Activated CD4-positive, alpha-beta T cell treated with anti-CD3 and anti-CD28 coated beads for 36 hours (primary cell): ENCODE measurements at regions of chr11 and their contacts with region 1.

Region 1: DNA sequence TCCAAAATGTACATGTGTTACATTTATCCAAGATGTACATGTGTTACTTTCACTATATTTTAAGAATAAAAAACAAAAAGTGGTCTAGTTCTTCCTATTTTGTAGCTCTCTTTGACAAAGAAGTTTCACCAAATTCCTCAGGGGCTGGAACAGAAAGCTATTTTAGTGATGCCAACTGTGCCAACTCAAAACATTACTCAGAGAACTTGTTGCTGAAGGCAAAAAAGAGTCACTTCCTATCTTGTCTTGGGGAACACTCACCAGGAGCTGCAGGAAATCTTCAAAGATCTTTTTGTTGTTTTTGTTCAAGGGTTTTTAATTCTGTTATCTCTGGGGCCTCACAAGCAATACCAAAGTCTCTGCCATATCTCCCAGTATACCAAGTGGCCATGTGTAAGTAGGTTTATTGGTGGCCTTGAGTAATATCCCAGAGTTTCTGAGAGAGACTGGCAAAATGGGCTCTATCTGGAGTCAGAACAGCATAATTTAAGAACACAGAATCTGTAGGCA is 13.6 kb upstream of the EED start:
- DNase-seq: no peak
- ATAC-seq: peak; percentile 28
- H3K4me3 Mint-ChIP-seq: peak overlapping the region; percentile 20
- H3K27ac Mint-ChIP-seq: peak overlapping the region; percentile 86
- H3K4me1 Mint-ChIP-seq: peaks cover 65% of the 10 kb centered on the region
- H3K27me3 Mint-ChIP-seq: no peaks in the 10 kb centered on the region

Region 2: DNA sequence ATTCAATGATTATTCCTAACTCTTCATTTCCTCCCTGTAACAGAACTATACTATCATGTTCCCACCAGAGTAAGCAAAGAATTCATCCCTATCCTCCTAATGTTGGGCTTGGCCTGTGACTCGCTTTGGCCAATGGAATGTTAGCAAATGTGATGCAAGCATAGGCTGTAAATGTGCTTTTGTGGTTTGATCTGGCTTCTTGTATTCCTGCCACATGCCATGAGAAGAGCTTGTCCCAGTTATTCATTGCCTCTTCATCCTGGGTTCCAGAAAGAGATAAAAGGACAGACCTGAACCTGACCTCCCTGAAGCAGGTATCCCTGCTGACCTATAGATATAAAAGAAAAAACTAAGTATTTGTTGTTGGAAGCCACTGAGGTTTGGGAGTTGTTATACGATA is 471.1 kb before region 1 on chr11:
- CTCF ChIA-PET with region 1: no interaction called
- POLR2A ChIA-PET with region 1: no interaction called
- intact Hi-C with region 1: loop called in 1 of 2 experiments (anchors 5 kb)
- DNase-seq: no peak
- ATAC-seq: no peak
- H3K4me3 Mint-ChIP-seq: no peak overlapping the region
- H3K27ac Mint-ChIP-seq: no peak overlapping the region
- H3K4me1 Mint-ChIP-seq: peaks cover 65% of the 10 kb centered on the region
- H3K27me3 Mint-ChIP-seq: no peaks in the 10 kb centered on the region

Region 3: GRCh38 chr11:86174101-86175046 is 56.6 kb before region 1 on chr11:
- CTCF ChIA-PET with region 1: interaction called, 3 read pairs
- POLR2A ChIA-PET with region 1: interaction called, 3 read pairs
- intact Hi-C with region 1: loop called in 1 of 2 experiments (anchors 1 kb)
- DNase-seq: peak; percentile 30
- ATAC-seq: peak; percentile 18
- H3K4me3 Mint-ChIP-seq: no peak overlapping the region
- H3K27ac Mint-ChIP-seq: no peak overlapping the region
- H3K4me1 Mint-ChIP-seq: peaks cover 31% of the 10 kb centered on the region
- H3K27me3 Mint-ChIP-seq: no peaks in the 10 kb centered on the region

Region 4: DNA sequence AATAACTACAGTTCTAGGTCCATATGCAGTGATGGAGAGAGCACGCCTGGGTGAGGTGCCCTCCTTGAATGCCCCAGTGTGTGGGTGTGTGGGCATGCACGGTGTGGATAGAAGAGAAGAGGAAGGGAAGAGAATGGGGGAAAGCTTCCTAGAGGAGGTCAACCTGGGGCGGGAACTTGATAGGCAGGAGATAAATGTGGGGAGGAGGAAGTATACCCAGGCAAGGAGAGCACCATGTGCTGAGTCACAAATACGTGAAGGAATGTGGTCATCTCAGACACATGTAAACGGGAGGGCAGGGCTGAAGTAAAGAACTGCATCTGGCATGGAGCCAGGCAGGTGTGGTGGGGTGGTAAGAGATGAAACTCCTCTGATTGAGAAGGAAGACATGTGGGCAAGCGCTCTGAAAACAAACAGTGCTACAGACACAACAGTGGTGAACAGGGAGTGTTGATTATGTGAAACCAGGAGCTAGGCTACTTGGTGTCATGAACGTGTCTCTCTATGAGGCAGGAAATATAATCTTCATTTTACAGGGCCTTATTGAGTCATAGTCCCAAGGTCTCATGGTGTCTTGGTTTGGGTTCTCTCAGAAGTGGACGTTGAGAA is 47.9 kb before region 1 on chr11:
- CTCF ChIA-PET with region 1: interaction called, 4 read pairs
- POLR2A ChIA-PET with region 1: interaction called, 13 read pairs
- intact Hi-C with region 1: loop called in 1 of 2 experiments (anchors 2 kb)
- DNase-seq: peak; percentile 89
- ATAC-seq: peak; percentile 84
- H3K4me3 Mint-ChIP-seq: no peak overlapping the region
- H3K27ac Mint-ChIP-seq: no peak overlapping the region
- H3K4me1 Mint-ChIP-seq: peaks cover 6% of the 10 kb centered on the region
- H3K27me3 Mint-ChIP-seq: no peaks in the 10 kb centered on the region

Region 5: GRCh38 chr11:86202013-86202336 is 29.0 kb before region 1 on chr11:
- CTCF ChIA-PET with region 1: no interaction called
- POLR2A ChIA-PET with region 1: no interaction called
- intact Hi-C with region 1: loop called (anchors 1 to 2 kb)
- DNase-seq: peak; percentile 39
- ATAC-seq: peak; percentile 94
- H3K4me3 Mint-ChIP-seq: no peak overlapping the region
- H3K27ac Mint-ChIP-seq: no peak overlapping the region
- H3K4me1 Mint-ChIP-seq: peaks cover 6% of the 10 kb centered on the region
- H3K27me3 Mint-ChIP-seq: peaks cover under 1% of the 10 kb centered on the region

Region 6: GRCh38 chr11:86660088-86660487 is 429.1 kb after region 1 on chr11:
- CTCF ChIA-PET with region 1: no interaction called
- POLR2A ChIA-PET with region 1: no interaction called
- intact Hi-C with region 1: no loop called
- DNase-seq: no peak
- ATAC-seq: no peak
- H3K4me3 Mint-ChIP-seq: no peak overlapping the region
- H3K27ac Mint-ChIP-seq: no peak overlapping the region
- H3K4me1 Mint-ChIP-seq: no peaks in the 10 kb centered on the region
- H3K27me3 Mint-ChIP-seq: peaks cover 1% of the 10 kb centered on the region